ENCODE measurements at regions of chr11 and their contacts with region 1.

Region 1: DNA sequence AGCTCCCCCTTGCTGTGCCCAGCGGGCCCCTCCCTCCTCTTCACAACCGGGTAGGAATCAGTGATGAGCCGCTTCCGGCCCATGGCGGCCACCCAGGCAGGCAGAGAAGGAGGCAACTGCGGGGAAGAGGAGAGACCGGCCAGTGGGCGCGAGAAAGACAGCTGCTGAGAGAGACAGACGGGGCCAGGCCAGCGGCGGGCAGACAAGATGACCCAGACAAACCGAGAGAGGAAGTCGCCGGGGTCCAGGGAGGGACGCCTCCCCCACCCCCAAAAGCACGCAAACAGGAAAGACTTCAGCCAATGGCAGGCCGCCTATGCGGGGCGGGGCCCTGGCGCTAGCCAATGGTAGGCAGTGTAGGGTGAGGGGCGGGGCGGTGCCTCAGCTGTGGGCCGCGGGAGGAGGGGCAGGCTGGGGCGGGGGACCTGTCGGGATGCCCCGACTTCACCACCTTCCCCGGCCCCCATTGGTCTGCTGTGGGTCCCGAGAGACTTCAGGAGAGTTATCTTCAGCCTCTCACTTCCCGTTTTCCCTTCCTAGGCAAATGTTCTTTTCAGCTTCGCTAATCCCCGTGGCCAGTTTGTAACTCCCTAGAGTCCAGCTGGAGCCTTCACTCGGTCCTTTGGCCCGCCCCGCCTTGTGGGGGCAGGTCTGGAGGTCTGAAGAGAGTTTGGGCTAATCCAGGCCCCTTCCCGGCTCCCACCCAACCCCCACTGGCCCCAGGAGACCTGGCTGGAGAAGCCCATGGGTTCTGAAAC is at the start of gene POLD4:
- DNase-seq: peak; percentile 97
- H3K4me3 ChIP-seq: peak within 1 kb of the TSS; percentile 66 to 76
- H3K27ac ChIP-seq: peak within 1 kb of the TSS; percentile 92 to 99
- H3K4me1 ChIP-seq: peaks cover 44 to 51% of the 10 kb centered on the region in 2 experiments; a peak in 3 of 4 replicates
- H3K27me3 ChIP-seq: no peaks in the 10 kb centered on the region
- CTCF ChIP-seq: no peak
- EP300 ChIP-seq: no peak
- RAD21 ChIP-seq: no peak
- polyA plus RNA-seq, gene POLD4: 80.4 and 89.4 TPM in 2 replicates

Region 2: GRCh38 chr11:67337257-67337656 is 16.2 kb before region 1 on chr11:
- CTCF ChIA-PET with region 1: interaction called, 30 read pairs
- POLR2A ChIA-PET with region 1: no interaction called
- DNase-seq: no peak
- H3K4me3 ChIP-seq: no peak overlapping the region
- H3K27ac ChIP-seq: no peak overlapping the region
- H3K4me1 ChIP-seq: no peaks in the 10 kb centered on the region
- H3K27me3 ChIP-seq: no peaks in the 10 kb centered on the region
- CTCF ChIP-seq: no peak
- EP300 ChIP-seq: no peak
- RAD21 ChIP-seq: no peak

Region 3: DNA sequence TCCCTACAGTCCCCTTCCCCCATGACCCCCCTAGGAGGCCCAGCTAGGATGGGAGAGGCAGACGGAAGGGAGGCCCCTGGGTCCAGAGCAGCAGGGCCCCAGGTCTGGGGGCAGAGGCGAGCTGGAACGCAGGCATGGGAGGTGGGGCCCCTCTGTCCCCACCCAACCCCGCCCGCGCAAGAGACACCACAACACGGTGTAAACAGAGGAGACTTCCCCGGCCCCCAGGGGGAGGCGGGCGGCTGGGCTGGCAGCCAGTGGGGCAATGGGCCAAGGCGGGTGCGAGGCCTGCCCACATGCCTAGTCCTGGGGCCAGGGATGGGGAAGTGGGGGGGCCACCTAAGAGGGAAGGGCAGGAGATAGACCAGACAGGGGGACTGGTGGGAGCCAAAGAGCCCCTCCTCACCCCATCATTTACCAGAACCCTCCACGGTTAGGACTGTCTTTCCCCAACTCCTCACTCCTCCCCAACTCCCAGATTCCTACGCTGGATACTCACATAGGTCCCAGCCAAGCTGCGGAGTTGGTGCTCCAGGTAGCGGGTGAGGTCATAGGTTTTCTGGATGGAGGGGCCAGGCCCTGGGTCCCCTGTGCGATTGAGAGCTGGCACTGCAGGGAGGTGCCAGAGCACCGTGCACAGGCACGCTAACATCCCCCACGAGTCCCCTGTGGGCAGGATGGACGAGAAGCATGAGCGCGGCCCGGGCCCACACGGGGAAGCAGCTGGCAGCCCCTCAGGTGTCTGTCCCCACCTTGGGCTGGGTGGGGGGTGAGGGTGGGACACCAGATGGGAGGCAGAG is 13.7 kb after region 1 on chr11:
- CTCF ChIA-PET with region 1: interaction called, 955 read pairs
- POLR2A ChIA-PET with region 1: interaction called, 5 read pairs
- DNase-seq: no peak
- H3K4me3 ChIP-seq: no peak overlapping the region
- H3K27ac ChIP-seq: no peak overlapping the region
- H3K4me1 ChIP-seq: peaks cover 17 to 27% of the 10 kb centered on the region in 2 experiments; a peak in 3 of 4 replicates
- H3K27me3 ChIP-seq: no peaks in the 10 kb centered on the region
- CTCF ChIP-seq: no peak
- EP300 ChIP-seq: no peak
- RAD21 ChIP-seq: no peak

Region 4: DNA sequence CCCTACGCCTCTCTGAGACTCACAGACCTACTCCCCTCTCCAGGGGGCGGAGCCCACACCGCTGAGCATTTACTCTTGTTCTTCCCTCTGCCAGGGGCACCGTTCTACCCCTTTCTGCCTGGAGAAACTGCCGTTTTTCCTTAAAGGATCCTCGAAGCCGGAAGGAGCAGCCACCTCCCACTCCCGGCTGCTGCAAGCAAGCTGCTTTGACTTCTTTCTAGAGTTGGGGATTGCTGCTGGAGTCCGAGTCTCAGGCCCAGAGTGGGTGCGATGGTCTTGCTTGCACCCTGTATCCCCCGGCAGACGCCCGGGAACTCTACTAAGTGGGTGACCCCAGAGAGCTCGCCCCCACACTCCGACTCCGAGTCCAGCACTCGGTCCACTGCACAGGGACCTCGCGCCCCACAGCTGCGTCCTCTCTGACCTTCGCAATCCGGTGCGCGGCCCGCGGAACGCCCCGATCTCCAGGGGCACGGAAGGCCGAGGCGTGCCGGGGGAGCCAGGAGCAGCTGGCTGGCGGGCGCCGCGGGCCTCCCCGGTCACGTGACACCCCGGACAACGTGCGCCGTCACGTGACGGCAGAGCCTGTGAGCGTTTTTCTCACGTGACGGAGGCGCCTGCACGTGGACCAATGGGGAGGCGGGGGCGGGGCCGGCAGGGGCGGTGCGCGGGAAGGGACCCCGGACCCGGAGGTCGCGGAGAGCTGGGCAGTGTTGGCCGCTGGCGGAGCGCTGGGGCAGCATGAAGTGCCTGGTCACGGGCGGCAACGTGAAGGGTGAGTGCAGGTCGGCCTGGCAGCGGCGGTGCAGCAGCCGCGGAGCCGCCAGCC is 38.0 kb after region 1 on chr11 and contains the start of gene RAD9A:
- CTCF ChIA-PET with region 1: interaction called, 955 read pairs
- POLR2A ChIA-PET with region 1: interaction called, 8 read pairs
- DNase-seq: peak; percentile 99
- H3K4me3 ChIP-seq: peak within 1 kb of the TSS; percentile 76 to 98
- H3K27ac ChIP-seq: peak within 1 kb of the TSS; percentile 80 to 82
- H3K4me1 ChIP-seq: peaks cover 0 to 13% of the 10 kb centered on the region in 2 experiments; a peak in 1 of 4 replicates
- H3K27me3 ChIP-seq: no peaks in the 10 kb centered on the region
- CTCF ChIP-seq: no peak
- EP300 ChIP-seq: peak in 1 of 2 experiments; percentile 8; a peak in 1 of 4 replicates
- RAD21 ChIP-seq: no peak
- polyA plus RNA-seq, gene RAD9A: 21.5 and 22.3 TPM in 2 replicates

Measured in SK-N-SH (cell line).